Mammary epithelial cell (primary cell): ENCODE measurements at regions of chrX and their contacts with region 1.

Region 1: DNA sequence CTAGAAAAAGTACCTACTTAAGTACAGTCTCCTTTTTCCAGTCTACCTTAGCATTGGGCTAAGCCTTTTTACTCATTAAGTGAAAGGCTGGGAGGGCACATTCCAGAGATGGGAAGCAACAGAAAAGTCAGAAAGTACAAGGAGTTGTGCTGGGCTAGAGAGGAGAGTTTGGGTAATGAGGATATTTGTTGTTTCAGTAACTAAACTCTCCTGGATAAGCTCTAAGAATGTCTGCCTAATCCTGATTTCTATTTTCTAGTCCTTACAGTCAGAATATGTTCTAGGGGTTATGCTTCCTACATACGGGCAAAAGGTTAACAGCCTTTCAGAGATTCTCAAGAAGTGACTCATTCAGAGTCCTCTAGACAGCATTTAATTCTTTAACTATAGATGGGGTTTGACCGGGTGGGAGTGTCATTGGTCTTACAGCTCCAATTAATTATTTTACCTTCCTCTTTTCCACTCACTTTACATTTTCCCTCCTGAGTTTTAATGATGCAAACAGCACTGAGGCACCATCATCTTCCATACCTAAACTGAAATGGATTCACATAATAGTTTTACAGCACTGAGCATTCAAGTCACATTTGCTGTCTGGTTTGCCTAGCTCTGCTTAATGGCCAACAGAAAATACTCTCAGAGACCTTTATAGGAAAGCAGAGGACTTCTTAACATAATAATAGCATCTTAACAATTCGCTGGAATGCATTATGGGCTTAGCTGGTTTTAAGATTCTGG is 42.9 kb downstream of the USP26 start:
- DNase-seq: peak; percentile 16
- H3K4me3 ChIP-seq: no peak overlapping the region
- H3K27ac ChIP-seq: no peak overlapping the region
- H3K4me1 ChIP-seq: peaks cover 5% of the 10 kb centered on the region
- H3K27me3 ChIP-seq: no peaks in the 10 kb centered on the region
- CTCF ChIP-seq: no peak

Region 2: DNA sequence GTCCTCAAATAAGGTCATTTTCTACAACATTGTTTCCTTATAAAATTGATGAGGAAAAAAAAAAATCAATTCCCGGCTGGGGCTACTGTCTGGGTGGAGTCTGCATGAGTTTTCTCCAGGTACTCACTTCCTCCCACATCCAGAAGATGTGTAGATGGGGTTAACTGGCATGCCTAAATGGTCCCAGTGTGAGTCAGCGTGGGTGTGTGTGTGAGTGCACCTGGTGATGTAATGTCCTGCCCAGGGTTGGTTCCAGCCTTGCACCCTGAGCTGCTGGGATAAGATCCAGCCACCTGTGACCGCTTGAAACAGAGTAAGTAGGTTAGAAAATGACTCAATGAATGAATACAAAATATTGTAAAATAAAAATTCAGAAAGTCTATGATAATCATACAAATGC is 31.8 kb after region 1 on chrX:
- CTCF ChIA-PET with region 1: no interaction called
- dilution Hi-C with region 1: no loop called
- in situ Hi-C with region 1: no loop called
- intact Hi-C with region 1: loop called (anchors 5 kb)
- DNase-seq: peak; percentile 83
- H3K4me3 ChIP-seq: no peak overlapping the region
- H3K27ac ChIP-seq: no peak overlapping the region
- H3K4me1 ChIP-seq: peaks cover 16% of the 10 kb centered on the region
- H3K27me3 ChIP-seq: no peaks in the 10 kb centered on the region
- CTCF ChIP-seq: no peak